Activated naive CD4-positive, alpha-beta T cell treated with anti-CD3 and anti-CD28 coated beads, Interleukin-2, amount 10 ng/mL, durations not matched to agents 7 days and 5 days (primary cell): ENCODE measurements at regions of chr6 and their contacts with region 1.

Region 1: GRCh38 chr6:73451223-73452107 is 632 bp downstream of the CGAS start:
- DNase-seq: peak; percentile 65
- H3K4me3 Mint-ChIP-seq: peak overlapping the region; percentile 96
- H3K27ac Mint-ChIP-seq: peak overlapping the region; percentile 88
- H3K4me1 Mint-ChIP-seq: peaks cover 59% of the 10 kb centered on the region
- H3K27me3 Mint-ChIP-seq: no peaks in the 10 kb centered on the region

Region 2: GRCh38 chr6:73461537-73462350 is 10.3 kb after region 1 on chr6 and contains the start of gene MTO1:
- CTCF ChIA-PET with region 1: interaction called, 30 read pairs
- DNase-seq: peak; percentile 91
- H3K4me3 Mint-ChIP-seq: peak within 1 kb of the TSS; percentile 98
- H3K27ac Mint-ChIP-seq: peak within 1 kb of the TSS; percentile 100
- H3K4me1 Mint-ChIP-seq: peaks cover 69% of the 10 kb centered on the region
- H3K27me3 Mint-ChIP-seq: no peaks in the 10 kb centered on the region